GM12878 (cell line): ENCODE measurements at regions of chr12 and their contacts with region 1.

Region 1: DNA sequence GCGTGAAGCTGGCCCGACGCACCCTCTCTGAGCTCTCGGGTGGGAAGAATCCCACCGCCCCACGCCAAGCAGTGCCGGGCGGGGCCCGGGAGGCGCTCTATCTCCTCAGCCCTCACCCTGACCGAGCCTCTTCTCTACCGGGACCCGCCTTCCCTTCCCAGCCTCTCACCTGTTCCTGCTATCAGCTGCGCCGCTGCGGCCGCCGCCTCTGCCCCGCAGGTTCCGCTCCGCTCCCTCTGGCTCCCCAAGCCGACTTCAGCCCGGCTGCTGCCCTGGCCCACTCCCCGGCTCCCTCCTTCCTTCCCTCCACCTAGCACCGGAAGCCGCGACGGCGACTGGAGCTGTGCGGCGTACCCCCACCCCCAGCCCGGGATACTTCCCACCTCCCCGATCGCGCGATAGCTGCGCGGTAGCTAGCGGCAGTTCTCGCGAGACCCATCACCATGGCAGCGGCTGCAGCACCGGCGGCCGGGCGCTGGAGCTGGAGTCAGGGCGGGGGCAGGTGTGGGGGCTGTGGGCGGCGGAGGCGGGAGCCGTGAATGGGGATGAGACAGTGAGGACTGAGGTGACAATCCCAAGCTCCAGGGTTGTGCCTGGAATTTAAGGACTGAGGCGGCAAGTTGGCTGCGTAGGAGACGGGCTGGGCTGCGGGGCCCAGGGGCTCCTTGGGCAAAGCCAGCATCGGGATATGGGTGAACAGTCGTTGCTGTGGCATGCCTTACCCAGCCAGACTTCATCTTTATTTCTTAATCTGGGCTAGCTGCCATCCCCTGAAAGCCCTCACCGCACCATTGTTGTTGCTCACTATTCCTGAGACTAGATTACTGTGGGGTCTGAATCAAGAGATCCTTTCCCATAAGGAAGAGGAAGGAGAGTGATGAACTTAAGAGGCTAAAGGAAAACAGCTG is at the start of gene ARF3:
- DNase-seq: peak; percentile 80
- ATAC-seq: peak; percentile 93
- H3K4me3 ChIP-seq: peak within 1 kb of the TSS; percentile 95
- H3K27ac ChIP-seq: peak within 1 kb of the TSS; percentile 62
- H3K4me1 ChIP-seq: peaks cover 14% of the 10 kb centered on the region
- H3K27me3 ChIP-seq: no peaks in the 10 kb centered on the region; a peak in 1 of 4 replicates
- CTCF ChIP-seq: 0 out of 6 replicates have a peak, but pooled peaks of 1 of the 3 experiments have one; percentile 8
- EP300 ChIP-seq: no peak
- POLR2A ChIP-seq: peak; percentile 83
- RAD21 ChIP-seq: no peak
- polyA plus RNA-seq, gene ARF3: 8.7 to 13.2 TPM

Region 2: DNA sequence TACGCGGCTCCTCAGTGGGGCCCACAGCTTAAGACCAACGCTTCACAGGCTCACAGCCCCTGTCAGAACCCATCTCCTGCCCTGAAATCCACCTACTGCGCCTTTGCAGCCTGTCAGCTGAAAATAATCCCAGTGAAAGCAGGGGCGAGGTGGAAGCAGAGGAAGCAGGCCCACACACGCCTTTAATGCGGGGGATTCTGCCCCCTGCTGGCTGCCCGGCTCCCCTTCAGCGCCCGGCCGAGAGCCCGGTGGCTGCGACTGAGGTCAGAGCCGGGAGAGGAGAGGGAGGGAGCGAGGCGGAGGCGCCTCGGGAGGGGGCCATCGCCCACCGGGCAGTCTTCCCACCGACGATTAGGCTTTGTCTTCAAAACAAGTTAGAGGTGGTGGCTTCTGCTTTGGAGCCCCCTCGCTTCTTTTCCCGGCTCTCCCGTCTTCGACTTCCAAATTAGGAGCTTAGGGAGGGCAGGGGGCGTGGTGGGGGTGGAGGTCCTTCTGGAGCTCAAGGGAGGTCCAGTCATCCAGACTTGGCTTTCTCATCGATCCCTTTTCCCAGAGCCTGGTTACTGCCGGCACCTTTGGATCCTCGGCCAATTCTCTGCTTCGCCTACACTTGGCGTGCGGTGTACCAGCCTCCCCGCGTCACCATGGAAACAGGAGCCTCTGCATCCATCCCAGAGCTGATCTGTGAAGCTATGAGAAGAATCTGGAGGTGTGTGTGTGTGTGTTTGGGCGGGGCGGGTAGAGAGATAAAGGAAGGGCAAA is 66.6 kb before region 1 on chr12:
- CTCF ChIA-PET with region 1: no interaction called
- POLR2A ChIA-PET with region 1: no interaction called
- RAD21 ChIA-PET with region 1: no interaction called
- SMC1A ChIA-PET with region 1: no interaction called
- in situ Hi-C with region 1: no loop called
- intact Hi-C with region 1: no loop called
- DNase-seq: no peak
- ATAC-seq: peak; percentile 100
- H3K4me3 ChIP-seq: no peak overlapping the region
- H3K27ac ChIP-seq: no peak overlapping the region
- H3K4me1 ChIP-seq: no peaks in the 10 kb centered on the region
- H3K27me3 ChIP-seq: no peaks in the 10 kb centered on the region; a peak in 1 of 4 replicates
- CTCF ChIP-seq: peak; percentile 94 to 95 (median 95)
- EP300 ChIP-seq: no peak
- POLR2A ChIP-seq: no peak
- RAD21 ChIP-seq: peak; percentile 78

Region 3: GRCh38 chr12:48924617-48925303 is 32.6 kb before region 1 on chr12:
- CTCF ChIA-PET with region 1: interaction called, 15 read pairs
- POLR2A ChIA-PET with region 1: interaction called, 8 read pairs
- RAD21 ChIA-PET with region 1: interaction called, 8 read pairs
- SMC1A ChIA-PET with region 1: interaction called, 5 read pairs
- in situ Hi-C with region 1: no loop called
- intact Hi-C with region 1: no loop called
- DNase-seq: peak; percentile 40
- ATAC-seq: peak; percentile 92
- H3K4me3 ChIP-seq: peak overlapping the region; percentile 98
- H3K27ac ChIP-seq: peak overlapping the region; percentile 90
- H3K4me1 ChIP-seq: peaks cover 22% of the 10 kb centered on the region
- H3K27me3 ChIP-seq: no peaks in the 10 kb centered on the region
- CTCF ChIP-seq: peak; percentile 88 to 95 (median 93)
- EP300 ChIP-seq: no peak
- POLR2A ChIP-seq: no peak
- RAD21 ChIP-seq: peak; percentile 88

Region 4: GRCh38 chr12:48936379-48936979 is 20.9 kb before region 1 on chr12:
- CTCF ChIA-PET with region 1: interaction called, 40 read pairs
- POLR2A ChIA-PET with region 1: no interaction called
- RAD21 ChIA-PET with region 1: no interaction called
- SMC1A ChIA-PET with region 1: interaction called, 4 read pairs
- in situ Hi-C with region 1: no loop called
- intact Hi-C with region 1: no loop called
- DNase-seq: no peak
- ATAC-seq: peak; percentile 95
- H3K4me3 ChIP-seq: no peak overlapping the region
- H3K27ac ChIP-seq: no peak overlapping the region
- H3K4me1 ChIP-seq: no peaks in the 10 kb centered on the region
- H3K27me3 ChIP-seq: no peaks in the 10 kb centered on the region
- CTCF ChIP-seq: peak; percentile 83 to 95 (median 90)
- EP300 ChIP-seq: no peak
- POLR2A ChIP-seq: no peak
- RAD21 ChIP-seq: peak; percentile 62

Region 5: DNA sequence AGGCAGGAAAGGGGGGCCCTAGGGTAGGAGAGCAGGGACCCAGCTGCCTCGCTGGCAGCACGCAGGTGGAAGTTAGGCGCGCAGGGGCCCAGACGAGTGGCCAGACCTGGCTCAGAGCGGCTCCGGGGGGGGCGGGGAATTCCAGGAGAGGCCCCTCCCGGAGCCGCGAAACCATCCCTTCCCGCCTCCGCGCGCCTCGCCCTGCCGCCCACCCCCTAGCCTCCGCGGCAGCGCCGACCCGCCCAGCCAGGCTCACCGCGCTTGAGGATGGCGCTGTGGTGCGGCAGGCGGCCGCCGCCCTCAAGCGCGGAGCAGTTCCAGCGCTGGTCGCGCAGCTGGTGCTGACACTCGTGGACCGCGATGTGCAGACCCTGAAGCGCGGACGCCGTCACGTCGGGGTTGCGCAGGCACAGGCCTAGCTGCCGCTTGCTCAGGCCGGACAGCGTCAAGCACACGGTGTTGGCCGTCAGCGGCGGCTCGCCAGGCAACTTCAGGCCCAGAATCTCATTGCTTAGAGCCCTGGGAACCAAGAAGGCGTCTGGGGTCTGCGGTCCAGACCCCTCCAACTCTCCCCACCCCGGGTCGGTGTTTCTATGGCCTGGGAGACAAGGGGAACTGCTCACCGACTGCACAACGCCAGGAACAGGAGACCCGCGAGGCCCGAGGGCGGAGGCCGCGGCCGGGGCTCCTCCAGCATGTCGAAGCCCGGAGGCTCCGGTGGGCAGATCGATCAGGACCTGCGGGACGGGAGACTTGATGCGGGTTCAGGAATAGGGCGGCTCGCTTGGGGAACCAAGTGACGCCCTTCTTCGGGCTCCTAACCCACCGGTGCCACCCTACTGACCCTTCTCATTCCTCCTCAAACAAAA is 12.7 kb after region 1 on chr12:
- CTCF ChIA-PET with region 1: interaction called, 27 read pairs
- POLR2A ChIA-PET with region 1: interaction called, 86 read pairs
- RAD21 ChIA-PET with region 1: interaction called, 35 read pairs
- SMC1A ChIA-PET with region 1: interaction called, 18 read pairs
- in situ Hi-C with region 1: no loop called
- intact Hi-C with region 1: no loop called
- DNase-seq: no peak
- ATAC-seq: peak; percentile 51
- H3K4me3 ChIP-seq: no peak overlapping the region
- H3K27ac ChIP-seq: no peak overlapping the region
- H3K4me1 ChIP-seq: peaks cover 47% of the 10 kb centered on the region
- H3K27me3 ChIP-seq: peaks cover 19 to 30% of the 10 kb centered on the region in 2 experiments
- CTCF ChIP-seq: peak in 1 of 3 experiments; percentile 7; a peak in 2 of 6 replicates
- EP300 ChIP-seq: no peak
- POLR2A ChIP-seq: no peak
- RAD21 ChIP-seq: no peak

Region 6: DNA sequence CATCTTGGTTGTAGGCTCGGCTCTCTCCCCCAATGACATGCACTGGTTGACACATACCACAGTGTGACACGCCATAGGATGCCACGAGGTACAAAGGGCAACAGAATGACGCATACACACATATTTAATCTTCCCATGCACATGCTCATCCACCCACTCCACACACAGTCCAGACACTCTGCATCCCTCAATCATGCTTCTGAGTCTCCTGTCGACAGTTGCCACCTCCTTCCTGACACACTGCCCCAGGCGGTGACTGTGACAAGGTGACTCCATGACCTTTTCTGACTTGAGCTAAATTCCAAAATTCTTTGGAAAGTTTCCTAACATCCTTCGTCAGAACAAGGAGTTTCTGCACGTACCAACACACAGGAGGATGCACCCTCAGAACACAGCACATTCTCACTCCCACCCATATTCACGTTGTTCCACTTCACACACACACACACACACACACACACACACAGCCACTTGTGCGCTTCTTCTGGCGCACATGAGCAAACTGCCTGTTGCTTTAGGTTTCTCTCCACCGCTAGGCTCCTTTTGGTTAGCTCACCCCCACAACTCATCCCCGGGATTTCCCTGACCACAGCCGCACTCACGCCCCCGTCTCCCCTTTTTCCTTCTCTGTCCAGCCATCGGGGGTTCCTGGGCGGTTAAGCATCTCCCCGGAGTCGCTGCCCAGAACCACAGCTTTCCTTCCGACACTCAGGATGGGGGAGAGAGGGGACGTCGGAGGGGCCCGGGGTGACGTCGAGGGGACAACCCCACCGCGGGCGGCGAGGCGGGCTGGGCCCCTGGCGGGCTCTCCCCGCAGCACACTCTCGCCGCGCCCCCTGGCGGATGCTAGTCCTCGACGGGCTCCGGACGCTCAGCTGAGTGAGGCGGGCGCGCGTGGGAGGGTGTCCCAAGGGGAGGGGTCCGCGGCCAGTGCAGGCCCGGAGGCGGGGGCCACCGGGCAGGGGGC is 20.2 kb after region 1 on chr12:
- CTCF ChIA-PET with region 1: interaction called, 39 read pairs
- POLR2A ChIA-PET with region 1: interaction called, 5 read pairs
- RAD21 ChIA-PET with region 1: interaction called, 18 read pairs
- SMC1A ChIA-PET with region 1: interaction called, 14 read pairs
- in situ Hi-C with region 1: no loop called
- intact Hi-C with region 1: no loop called
- DNase-seq: no peak
- ATAC-seq: peak; percentile 84
- H3K4me3 ChIP-seq: no peak overlapping the region; the same call in 1 of the 2 replicates
- H3K27ac ChIP-seq: no peak overlapping the region
- H3K4me1 ChIP-seq: peaks cover 35% of the 10 kb centered on the region
- H3K27me3 ChIP-seq: peaks cover 37 to 44% of the 10 kb centered on the region in 2 experiments
- CTCF ChIP-seq: peak; percentile 61 to 82 (median 70); a peak in 5 of 6 replicates
- EP300 ChIP-seq: no peak; a peak in 1 of 4 replicates
- POLR2A ChIP-seq: no peak
- RAD21 ChIP-seq: peak; percentile 50